BJ (cell line): ENCODE measurements at regions of chrX and their contacts with region 1.

Region 1: GRCh38 chrX:19334945-19335626 is 8.6 kb upstream of the PDHA1 start:
- DNase-seq: no peak
- H3K4me3 ChIP-seq: no peak overlapping the region
- H3K27me3 ChIP-seq: no peaks in the 10 kb centered on the region; the same call in 1 of the 2 replicates
- CTCF ChIP-seq: no peak

Region 2: DNA sequence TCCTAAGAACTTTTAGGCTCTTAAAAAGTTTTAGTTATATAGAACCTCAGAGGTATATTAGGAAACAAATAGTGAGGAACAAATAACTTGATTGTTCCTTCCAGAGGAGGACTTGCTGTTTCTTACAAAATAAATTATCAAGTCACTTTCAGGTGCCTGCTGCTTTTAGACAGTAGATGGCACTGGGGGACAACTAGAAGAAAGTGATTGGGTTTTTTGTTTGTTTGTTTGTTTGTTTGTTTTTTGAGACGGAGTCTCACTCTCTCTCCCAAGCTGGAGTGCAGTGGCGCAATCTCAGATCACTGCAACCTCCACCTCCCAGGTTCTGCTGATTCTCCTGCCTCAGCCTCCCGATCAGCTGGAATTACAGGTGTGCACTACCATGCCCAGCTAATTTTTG is 945.1 kb before region 1 on chrX:
- CTCF ChIA-PET with region 1: interaction called, 12 read pairs
- POLR2A ChIA-PET with region 1: no interaction called
- DNase-seq: no peak
- H3K4me3 ChIP-seq: no peak overlapping the region
- H3K27me3 ChIP-seq: no peaks in the 10 kb centered on the region
- CTCF ChIP-seq: no peak

Region 3: DNA sequence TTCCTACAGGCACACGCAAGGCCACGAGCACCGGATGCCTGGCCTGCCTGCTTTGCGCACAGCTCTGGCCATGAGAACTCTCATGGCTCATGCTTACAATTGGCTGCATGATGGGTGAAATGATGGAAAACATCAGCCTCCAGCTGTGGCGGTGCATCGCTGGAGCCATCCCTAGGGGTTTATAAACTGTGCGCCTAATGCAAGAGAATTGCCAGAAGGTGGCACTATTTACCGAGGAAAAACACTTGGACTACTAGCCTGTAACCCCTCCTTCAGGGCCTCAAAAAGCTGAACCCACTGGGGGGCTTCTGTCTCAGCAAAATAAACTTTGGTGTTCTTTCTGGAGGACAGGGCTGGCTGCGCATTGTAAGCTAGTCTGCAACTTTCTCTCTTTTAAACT is 403.1 kb before region 1 on chrX:
- CTCF ChIA-PET with region 1: interaction called, 20 read pairs
- POLR2A ChIA-PET with region 1: no interaction called
- DNase-seq: no peak
- H3K4me3 ChIP-seq: no peak overlapping the region
- H3K27me3 ChIP-seq: no peaks in the 10 kb centered on the region
- CTCF ChIP-seq: peak; percentile 40